ENCODE measurements at regions of chr2 and their contacts with region 1.

Region 1: DNA sequence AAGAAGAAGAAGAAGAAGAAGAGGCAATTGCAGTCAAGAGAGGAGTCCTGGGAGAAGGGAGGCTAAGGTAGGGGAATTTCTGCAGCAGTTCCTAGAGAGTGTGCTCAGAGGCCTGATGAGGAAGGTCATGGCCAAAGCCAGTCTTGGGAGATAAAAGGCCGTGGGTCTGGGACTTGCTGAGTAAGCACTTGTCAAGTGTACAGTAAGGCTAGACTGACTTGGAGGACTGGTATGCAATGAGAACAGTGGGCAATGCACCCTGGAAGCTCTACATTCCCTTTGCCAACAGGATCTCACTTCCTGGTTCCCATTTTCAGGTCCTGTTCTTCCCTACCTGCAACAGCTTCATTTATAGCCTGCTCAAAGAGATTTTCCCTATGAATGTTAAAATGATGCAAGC is 28.6 kb upstream of the CYP26B1 start:
- DNase-seq: no peak
- ATAC-seq: no peak
- H3K4me3 ChIP-seq: no peak overlapping the region
- H3K27ac ChIP-seq: no peak overlapping the region
- H3K4me1 ChIP-seq: peaks cover 0 to 10% (median 0%) of the 10 kb centered on the region in 9 donors
- H3K27me3 ChIP-seq: no peaks in the 10 kb centered on the region
- CTCF ChIP-seq: no peak

Region 2: DNA sequence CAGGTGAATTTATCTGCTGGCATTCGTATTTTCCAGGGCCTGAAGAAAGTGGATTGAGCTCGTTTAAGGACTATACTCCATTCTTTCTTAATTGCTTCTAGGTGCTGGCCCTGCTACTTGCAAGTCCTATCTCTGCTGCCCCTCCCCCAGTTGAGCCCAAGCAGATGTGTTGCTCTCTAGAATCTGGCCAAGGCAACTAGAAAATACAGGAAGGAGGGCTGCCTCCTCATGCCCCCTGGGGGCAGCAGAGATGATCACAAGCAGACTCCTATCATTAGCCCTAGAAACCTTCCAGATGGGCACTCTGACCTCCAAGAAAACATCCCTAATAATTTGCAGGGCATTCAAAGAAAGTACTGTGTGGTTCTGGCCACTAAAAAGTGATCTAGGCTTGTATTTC is 43.9 kb after region 1 on chr2:
- intact Hi-C with region 1: no loop called
- DNase-seq: no peak
- ATAC-seq: no peak
- H3K4me3 ChIP-seq: no peak overlapping the region
- H3K27ac ChIP-seq: no peak overlapping the region
- H3K4me1 ChIP-seq: no peaks in the 10 kb centered on the region
- H3K27me3 ChIP-seq: no peaks in the 10 kb centered on the region
- CTCF ChIP-seq: peak in 1 of 9 donors; percentile 19

Region 3: DNA sequence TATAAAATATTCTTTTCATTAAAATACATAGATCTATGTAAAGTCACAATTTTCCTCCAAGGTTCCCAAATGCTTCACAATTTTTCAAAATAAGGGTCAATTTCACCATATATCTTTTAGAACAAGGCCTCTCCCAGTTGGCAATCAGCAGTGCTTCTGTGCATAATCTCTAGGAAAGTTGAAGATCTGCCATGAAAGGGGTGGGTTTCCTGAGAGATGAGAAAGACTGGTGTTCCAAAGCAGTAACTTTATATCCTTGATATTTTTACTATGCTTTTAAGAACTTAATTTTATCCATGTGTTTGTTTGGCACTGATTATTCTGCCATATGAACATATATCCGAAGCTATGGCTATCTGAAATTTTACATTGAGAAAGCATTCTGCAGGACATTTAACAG is 170.8 kb after region 1 on chr2:
- intact Hi-C with region 1: loop called in 1 of 10 experiments (anchors 5 kb)
- DNase-seq: no peak
- ATAC-seq: no peak
- H3K4me3 ChIP-seq: no peak overlapping the region
- H3K27ac ChIP-seq: no peak overlapping the region
- H3K4me1 ChIP-seq: peaks cover 0 to 10% (median 0%) of the 10 kb centered on the region in 9 donors
- H3K27me3 ChIP-seq: no peaks in the 10 kb centered on the region
- CTCF ChIP-seq: no peak

Measured in heart right ventricle (tissue), 16 donors.